Activated CD4-positive, alpha-beta T cell treated with anti-CD3 and anti-CD28 coated beads for 36 hours (primary cell): ENCODE measurements at regions of chr3 and their contacts with region 1.

Region 1: GRCh38 chr3:150408221-150409102 is at the start of gene TSC22D2:
- DNase-seq: peak; percentile 96
- ATAC-seq: peak; percentile 73
- H3K4me3 Mint-ChIP-seq: peak within 1 kb of the TSS; percentile 77
- H3K27ac Mint-ChIP-seq: peak within 1 kb of the TSS; percentile 100
- H3K4me1 Mint-ChIP-seq: peaks cover 21% of the 10 kb centered on the region
- H3K27me3 Mint-ChIP-seq: no peaks in the 10 kb centered on the region
- total RNA-seq, gene TSC22D2: 12.0 to 20.2 TPM

Region 2: DNA sequence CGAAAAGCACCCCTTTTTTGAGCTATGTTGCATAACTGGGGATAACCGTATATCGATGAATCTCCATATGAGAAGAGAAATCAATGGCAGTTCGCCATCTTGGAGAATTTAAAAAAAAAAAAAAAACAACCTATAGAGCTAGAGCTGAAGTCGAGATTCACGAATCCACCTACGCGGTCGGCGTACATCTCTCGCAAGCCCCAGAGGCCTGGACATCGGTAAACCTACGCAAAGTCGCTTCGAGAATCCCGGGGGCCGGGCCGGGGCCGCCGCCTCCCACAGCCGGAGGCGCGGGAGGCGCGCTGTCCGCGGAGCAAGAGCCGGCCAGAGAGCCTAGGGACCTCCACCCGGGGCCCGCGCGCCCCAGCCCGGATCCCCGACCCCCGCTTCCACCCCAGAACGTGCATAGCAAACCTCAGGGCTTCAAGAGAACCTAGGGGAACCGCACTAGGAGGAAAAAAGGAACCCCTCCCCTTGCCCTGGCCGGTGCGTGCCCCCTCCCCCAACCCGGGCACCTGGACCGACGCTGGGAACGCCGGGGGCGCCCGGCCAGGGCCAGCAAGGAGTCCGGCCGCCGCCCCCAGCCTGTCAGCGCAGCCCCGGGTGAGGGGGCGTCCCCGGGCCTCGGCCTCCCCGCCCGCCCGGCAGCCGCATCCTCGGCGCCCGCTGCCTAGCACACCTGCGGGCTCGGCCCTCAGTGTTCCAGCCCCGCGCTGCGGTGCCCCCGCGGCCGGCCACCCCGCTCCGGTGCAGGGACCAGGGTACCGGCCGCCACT is 438.3 kb before region 1 on chr3:
- CTCF ChIA-PET with region 1: no interaction called
- POLR2A ChIA-PET with region 1: no interaction called
- intact Hi-C with region 1: loop called in 1 of 2 experiments (anchors 1 kb)
- DNase-seq: peak; percentile 86
- ATAC-seq: peak; percentile 65
- H3K4me3 Mint-ChIP-seq: peak overlapping the region; percentile 83
- H3K27ac Mint-ChIP-seq: peak overlapping the region; percentile 51
- H3K4me1 Mint-ChIP-seq: peaks cover 14% of the 10 kb centered on the region
- H3K27me3 Mint-ChIP-seq: peaks cover 25% of the 10 kb centered on the region

Region 3: DNA sequence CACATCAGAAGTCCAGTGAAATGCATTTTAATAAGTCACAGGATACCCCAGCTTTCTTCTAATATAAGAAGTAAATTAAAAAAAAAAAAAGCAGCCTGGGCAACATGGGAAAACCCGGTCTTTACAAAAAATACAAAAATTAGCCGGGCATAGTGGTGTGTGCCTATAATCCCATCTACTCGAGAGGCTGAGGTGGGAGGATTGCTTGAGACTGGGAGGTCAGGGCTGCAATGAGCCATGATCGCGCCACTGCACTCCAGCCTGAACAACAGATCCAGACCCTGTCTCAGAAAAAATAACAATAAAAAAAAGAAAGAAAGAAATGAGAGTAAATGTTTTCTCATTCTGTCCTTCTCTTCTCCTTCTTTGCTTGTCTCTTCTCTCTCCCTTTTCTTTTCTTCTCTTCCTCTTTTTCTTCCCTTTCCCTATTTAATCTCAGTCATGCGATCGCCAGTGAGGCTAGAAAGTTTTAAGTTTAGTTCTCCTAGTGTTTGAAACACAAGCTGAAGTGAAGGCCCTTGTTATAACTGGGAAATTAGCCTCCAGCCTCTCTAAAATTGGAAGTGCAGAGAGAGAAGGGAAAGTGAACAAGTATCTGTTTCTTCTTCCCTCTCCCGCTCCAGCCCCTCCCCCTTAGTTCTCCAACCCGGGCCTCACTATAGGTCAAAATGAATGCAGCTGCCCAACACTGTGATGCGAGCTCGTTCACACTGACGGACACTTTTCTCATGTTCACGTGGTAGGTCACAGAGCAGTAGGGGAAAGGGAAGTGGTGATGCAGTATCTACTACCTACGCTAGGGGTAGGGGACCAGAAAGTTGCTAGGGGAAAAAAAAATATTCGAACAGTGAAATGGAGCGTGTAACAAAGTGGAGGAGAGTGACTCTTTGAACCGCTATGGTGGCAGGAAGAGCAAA is 23.9 kb before region 1 on chr3:
- CTCF ChIA-PET with region 1: interaction called, 17 read pairs
- POLR2A ChIA-PET with region 1: interaction called, 3 read pairs
- intact Hi-C with region 1: loop called (anchors 1 kb)
- DNase-seq: peak; percentile 72
- ATAC-seq: peak; percentile 96
- H3K4me3 Mint-ChIP-seq: peak overlapping the region; percentile 46
- H3K27ac Mint-ChIP-seq: peak overlapping the region; percentile 91
- H3K4me1 Mint-ChIP-seq: peaks cover 28% of the 10 kb centered on the region
- H3K27me3 Mint-ChIP-seq: no peaks in the 10 kb centered on the region

Region 4: GRCh38 chr3:150495563-150496168 is 87.2 kb after region 1 on chr3:
- CTCF ChIA-PET with region 1: interaction called, 14 read pairs
- POLR2A ChIA-PET with region 1: no interaction called
- intact Hi-C with region 1: loop called (anchors 1 to 2 kb)
- DNase-seq: no peak
- ATAC-seq: no peak
- H3K4me3 Mint-ChIP-seq: no peak overlapping the region
- H3K27ac Mint-ChIP-seq: no peak overlapping the region
- H3K4me1 Mint-ChIP-seq: no peaks in the 10 kb centered on the region
- H3K27me3 Mint-ChIP-seq: no peaks in the 10 kb centered on the region

Region 5: GRCh38 chr3:150567328-150567727 is 158.9 kb after region 1 on chr3:
- CTCF ChIA-PET with region 1: no interaction called
- POLR2A ChIA-PET with region 1: no interaction called
- intact Hi-C with region 1: no loop called
- DNase-seq: no peak
- ATAC-seq: no peak
- H3K4me3 Mint-ChIP-seq: no peak overlapping the region
- H3K27ac Mint-ChIP-seq: no peak overlapping the region
- H3K4me1 Mint-ChIP-seq: no peaks in the 10 kb centered on the region
- H3K27me3 Mint-ChIP-seq: no peaks in the 10 kb centered on the region

Region 6: GRCh38 chr3:150603153-150603979 is 194.9 kb after region 1 on chr3 and contains the start of gene SELENOT:
- CTCF ChIA-PET with region 1: no interaction called
- POLR2A ChIA-PET with region 1: interaction called, 9 read pairs
- intact Hi-C with region 1: loop called (anchors 1 to 5 kb)
- DNase-seq: peak; percentile 96
- ATAC-seq: peak; percentile 91
- H3K4me3 Mint-ChIP-seq: peak within 1 kb of the TSS; percentile 97
- H3K27ac Mint-ChIP-seq: peak within 1 kb of the TSS; percentile 98
- H3K4me1 Mint-ChIP-seq: peaks cover 68% of the 10 kb centered on the region
- H3K27me3 Mint-ChIP-seq: no peaks in the 10 kb centered on the region
- total RNA-seq, gene SELENOT: 88.6 to 134 TPM

Region 7: GRCh38 chr3:150798122-150798626 is 389.7 kb after region 1 on chr3:
- CTCF ChIA-PET with region 1: no interaction called
- POLR2A ChIA-PET with region 1: no interaction called
- intact Hi-C with region 1: no loop called
- DNase-seq: no peak
- ATAC-seq: no peak
- H3K4me3 Mint-ChIP-seq: no peak overlapping the region
- H3K27ac Mint-ChIP-seq: no peak overlapping the region
- H3K4me1 Mint-ChIP-seq: peaks cover 10% of the 10 kb centered on the region
- H3K27me3 Mint-ChIP-seq: peaks cover 1% of the 10 kb centered on the region

Region 8: DNA sequence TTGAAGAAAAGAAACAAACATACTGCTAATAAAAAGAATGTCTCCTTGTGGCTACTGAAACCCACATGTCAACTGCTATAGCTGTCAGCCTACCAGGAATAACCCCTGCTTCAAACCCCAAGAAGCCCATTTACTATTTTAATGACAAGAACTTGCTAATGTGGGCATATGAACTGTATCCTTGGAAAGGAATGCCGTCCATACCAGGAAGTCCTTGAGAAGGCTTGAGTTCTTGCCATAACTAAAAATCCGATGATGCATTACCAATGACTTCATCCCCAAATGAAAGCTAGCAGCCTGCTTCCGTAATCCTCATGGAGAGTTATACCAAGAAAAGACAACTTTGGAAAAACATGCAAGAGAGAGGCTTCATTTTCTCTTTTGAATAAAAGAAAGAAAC is 461.9 kb after region 1 on chr3:
- CTCF ChIA-PET with region 1: no interaction called
- POLR2A ChIA-PET with region 1: no interaction called
- intact Hi-C with region 1: loop called in 1 of 2 experiments (anchors 10 kb)
- DNase-seq: no peak
- ATAC-seq: no peak
- H3K4me3 Mint-ChIP-seq: no peak overlapping the region
- H3K27ac Mint-ChIP-seq: no peak overlapping the region
- H3K4me1 Mint-ChIP-seq: peaks cover 2% of the 10 kb centered on the region
- H3K27me3 Mint-ChIP-seq: peaks cover 15% of the 10 kb centered on the region